ENCODE measurements at regions of chr12 and their contacts with region 1.

Region 1: DNA sequence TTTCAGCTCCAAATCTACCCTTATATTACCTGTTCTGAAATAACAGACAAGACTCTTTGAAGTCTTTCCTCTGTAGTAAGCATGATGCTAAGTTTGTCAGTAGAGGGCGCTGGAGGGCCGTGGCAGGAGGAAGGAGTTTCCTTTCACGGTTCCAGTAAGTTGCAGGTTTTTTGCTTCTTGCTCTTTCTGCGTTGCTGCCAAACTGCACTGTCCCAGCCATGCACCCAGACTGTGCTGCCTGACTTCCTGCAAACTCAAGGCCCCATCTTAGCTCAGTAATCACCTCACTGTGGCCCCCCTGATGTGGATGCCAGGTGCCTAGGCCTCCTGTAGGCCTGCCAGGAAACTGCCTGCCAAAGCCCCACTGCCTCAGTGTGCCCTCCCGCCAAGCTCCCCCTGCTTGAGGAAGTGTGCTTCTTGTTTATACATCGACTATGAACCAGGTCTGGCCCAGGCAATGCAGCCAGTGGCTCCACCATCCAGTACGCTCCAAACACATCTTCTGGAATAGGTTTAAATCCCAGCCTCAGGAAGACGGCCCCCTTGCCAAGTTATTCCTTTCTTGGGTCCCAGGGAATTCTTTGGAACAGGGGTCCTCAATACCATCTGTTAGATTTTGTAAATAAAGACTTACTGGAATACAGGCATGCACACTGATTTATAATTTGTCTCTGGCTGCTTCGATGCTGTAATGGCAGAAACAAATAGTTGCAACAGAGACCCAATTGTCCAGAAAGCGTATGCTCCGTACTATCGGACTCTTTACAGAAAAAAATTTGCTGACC is 193.7 kb upstream of the LRIG3 start:
- DNase-seq: peak; percentile 63 to 88
- H3K4me3 ChIP-seq: no peak overlapping the region
- H3K27ac ChIP-seq: no peak overlapping the region
- H3K4me1 ChIP-seq: 0 out of 7 replicates have a peak, but pooled peaks cover 0 to 3% (median 0%) of the 10 kb centered on the region in 4 experiments
- H3K27me3 ChIP-seq: no peaks in the 10 kb centered on the region
- CTCF ChIP-seq: peak; percentile 53 to 90 (median 88)
- EP300 ChIP-seq: no peak
- POLR2A ChIP-seq: no peak
- RAD21 ChIP-seq: peak; percentile 94

Region 2: DNA sequence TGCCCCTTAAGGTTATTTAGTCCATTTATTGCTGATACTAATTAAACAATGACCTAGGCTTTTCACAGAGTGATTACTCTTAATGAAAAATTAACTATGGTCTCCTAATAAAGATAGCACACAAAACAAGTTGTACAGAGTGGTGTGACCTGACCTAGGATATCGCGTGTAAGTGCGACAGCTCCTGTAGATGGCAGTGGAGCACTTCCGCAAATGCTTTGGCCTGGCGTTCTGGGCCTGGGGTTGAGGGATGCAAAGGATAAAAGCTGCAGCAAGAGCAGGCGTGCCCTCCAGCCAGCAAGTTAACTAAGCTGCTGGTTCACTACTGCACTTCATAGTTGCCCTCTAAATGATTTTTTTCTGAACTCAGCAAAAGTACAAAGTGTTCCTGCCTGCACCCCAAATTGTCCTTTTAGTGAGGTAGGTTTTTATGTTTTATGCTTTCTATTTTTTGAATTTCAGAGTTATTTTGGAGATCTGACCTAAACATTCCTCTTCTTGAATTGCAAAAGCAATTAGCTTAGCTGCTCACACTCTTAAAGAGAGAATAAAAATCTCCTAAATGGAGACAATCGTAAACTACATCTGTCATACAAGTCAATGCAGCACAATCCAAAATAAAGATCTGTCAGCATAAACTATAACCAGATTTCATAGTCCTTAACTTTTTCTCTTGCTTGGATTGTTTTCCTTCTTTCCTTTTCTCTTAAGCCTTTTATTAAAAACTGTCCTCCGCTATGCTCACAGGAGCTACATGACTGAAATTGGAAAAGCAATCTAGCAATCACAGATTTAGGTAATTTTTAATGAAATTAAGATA is 573.3 kb before region 1 on chr12:
- CTCF ChIA-PET with region 1: interaction called, 13 read pairs
- POLR2A ChIA-PET with region 1: no interaction called
- DNase-seq: peak; percentile 75 to 78
- H3K4me3 ChIP-seq: no peak overlapping the region
- H3K27ac ChIP-seq: no peak overlapping the region
- H3K4me1 ChIP-seq: peaks cover 0 to 4% (median 1%) of the 10 kb centered on the region in 4 experiments; a peak in 3 of 7 replicates
- H3K27me3 ChIP-seq: no peaks in the 10 kb centered on the region
- CTCF ChIP-seq: peak; percentile 81 to 89 (median 86)
- EP300 ChIP-seq: no peak
- POLR2A ChIP-seq: no peak
- RAD21 ChIP-seq: peak; percentile 97

Region 3: GRCh38 chr12:58942345-58942744 is 171.7 kb before region 1 on chr12:
- CTCF ChIA-PET with region 1: no interaction called
- POLR2A ChIA-PET with region 1: no interaction called
- DNase-seq: no peak
- H3K4me3 ChIP-seq: no peak overlapping the region
- H3K27ac ChIP-seq: no peak overlapping the region
- H3K4me1 ChIP-seq: no peaks in the 10 kb centered on the region
- H3K27me3 ChIP-seq: no peaks in the 10 kb centered on the region
- CTCF ChIP-seq: no peak
- EP300 ChIP-seq: no peak
- POLR2A ChIP-seq: no peak
- RAD21 ChIP-seq: no peak

Region 4: GRCh38 chr12:59131462-59131861 is 17.4 kb after region 1 on chr12:
- CTCF ChIA-PET with region 1: interaction called, 28 read pairs
- POLR2A ChIA-PET with region 1: interaction called, 3 read pairs
- DNase-seq: no peak
- H3K4me3 ChIP-seq: no peak overlapping the region
- H3K27ac ChIP-seq: no peak overlapping the region
- H3K4me1 ChIP-seq: peaks cover 0 to 2% (median 0%) of the 10 kb centered on the region in 4 experiments; a peak in 1 of 7 replicates
- H3K27me3 ChIP-seq: no peaks in the 10 kb centered on the region
- CTCF ChIP-seq: no peak
- EP300 ChIP-seq: no peak
- POLR2A ChIP-seq: no peak
- RAD21 ChIP-seq: no peak

Region 5: DNA sequence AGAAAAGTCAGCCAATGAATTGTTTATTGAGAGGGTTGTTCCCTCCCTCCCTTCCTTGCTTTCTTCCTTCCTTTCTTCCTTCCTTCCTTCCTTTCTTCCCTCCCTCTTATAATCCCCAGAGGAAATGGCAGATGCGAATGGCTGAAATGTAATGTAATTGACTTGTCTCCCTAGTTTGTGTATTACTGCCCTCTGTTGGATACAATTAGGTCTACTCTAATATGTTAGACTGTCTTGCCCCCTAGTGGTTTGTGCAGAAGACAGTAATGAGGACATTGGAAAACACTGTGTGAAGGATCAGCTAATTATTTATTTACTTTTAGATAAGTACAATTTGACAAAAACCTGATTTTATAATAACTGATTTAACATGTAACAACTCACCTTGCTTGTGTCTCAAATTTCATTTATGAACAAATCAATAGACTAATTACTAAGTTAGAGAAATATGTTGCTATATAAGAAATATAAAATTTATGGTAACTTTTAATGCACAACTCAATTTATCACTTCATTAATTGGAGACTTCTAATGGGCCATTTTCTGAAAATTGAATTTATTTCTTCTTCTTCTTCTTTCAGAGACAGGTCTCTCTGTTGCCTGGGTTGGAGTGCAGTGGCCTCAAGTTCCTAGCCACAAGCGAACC is 36.1 kb after region 1 on chr12:
- CTCF ChIA-PET with region 1: interaction called, 103 read pairs
- POLR2A ChIA-PET with region 1: no interaction called
- DNase-seq: no peak
- H3K4me3 ChIP-seq: no peak overlapping the region
- H3K27ac ChIP-seq: no peak overlapping the region
- H3K4me1 ChIP-seq: no peaks in the 10 kb centered on the region
- H3K27me3 ChIP-seq: no peaks in the 10 kb centered on the region
- CTCF ChIP-seq: peak in 2 of 3 experiments; percentile 94 to 99; a peak in 3 of 4 replicates
- EP300 ChIP-seq: no peak
- POLR2A ChIP-seq: no peak
- RAD21 ChIP-seq: peak; percentile 96 to 97

Region 6: DNA sequence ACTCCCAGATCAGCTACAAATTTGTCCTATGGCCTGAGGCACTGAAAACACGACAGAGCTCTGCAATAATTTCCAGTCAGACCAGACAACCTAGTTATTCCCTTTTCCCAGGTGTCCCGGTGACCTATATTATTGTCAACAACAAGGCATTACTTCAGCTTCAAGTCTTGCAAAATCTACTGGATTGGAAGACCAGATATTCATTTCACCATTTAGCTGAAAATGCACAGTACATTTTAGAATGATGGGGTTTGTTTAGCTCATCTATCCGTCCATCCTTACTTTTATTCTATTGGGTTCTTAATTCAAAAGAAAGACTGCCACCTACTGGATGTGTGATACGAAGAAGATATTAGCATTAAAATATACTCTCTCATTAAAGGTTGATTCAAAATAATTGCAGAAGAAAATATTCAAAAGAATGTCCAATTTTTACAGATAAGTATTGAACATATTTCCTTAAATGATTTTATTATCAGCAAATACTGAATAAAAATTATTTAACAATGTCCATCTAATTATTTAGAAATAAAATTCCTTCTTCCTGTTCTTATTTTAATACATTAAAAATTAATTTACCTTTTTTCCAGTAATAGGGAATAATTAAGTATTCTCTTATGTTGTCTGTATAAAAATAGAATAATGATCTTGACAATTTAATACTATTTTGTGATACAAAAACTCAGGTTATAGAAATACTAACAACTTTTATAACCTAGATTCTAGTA is 51.1 kb after region 1 on chr12:
- CTCF ChIA-PET with region 1: interaction called, 34 read pairs
- POLR2A ChIA-PET with region 1: no interaction called
- DNase-seq: no peak
- H3K4me3 ChIP-seq: no peak overlapping the region
- H3K27ac ChIP-seq: no peak overlapping the region
- H3K4me1 ChIP-seq: no peaks in the 10 kb centered on the region
- H3K27me3 ChIP-seq: no peaks in the 10 kb centered on the region
- CTCF ChIP-seq: peak in 1 of 3 experiments; percentile 26; a peak in 1 of 4 replicates
- EP300 ChIP-seq: no peak
- POLR2A ChIP-seq: no peak
- RAD21 ChIP-seq: peak in 1 of 2 experiments; percentile 40; a peak in 3 of 4 replicates

Measured in H1 (cell line).